PC-9 (cell line): ENCODE measurements at regions of chr16 and their contacts with region 1.

Region 1: GRCh38 chr16:79601931-79602627 is 1.5 kb upstream of the MAF start:
- DNase-seq: peak in 1 of 2 experiments; percentile 28
- H3K4me3 ChIP-seq: no peak overlapping the region
- H3K27ac ChIP-seq: no peak overlapping the region
- H3K4me1 ChIP-seq: no peaks in the 10 kb centered on the region
- H3K27me3 ChIP-seq: peaks cover 31% of the 10 kb centered on the region
- CTCF ChIP-seq: peak; percentile 82

Region 2: GRCh38 chr16:78002915-78003538 is 1599.1 kb before region 1 on chr16:
- CTCF ChIA-PET with region 1: no interaction called
- POLR2A ChIA-PET with region 1: no interaction called
- intact Hi-C with region 1: loop called (anchors 10 kb)
- DNase-seq: peak; percentile 57 to 63
- H3K4me3 ChIP-seq: no peak overlapping the region
- H3K27ac ChIP-seq: no peak overlapping the region
- H3K4me1 ChIP-seq: no peaks in the 10 kb centered on the region
- H3K27me3 ChIP-seq: peaks cover 15% of the 10 kb centered on the region
- CTCF ChIP-seq: peak; percentile 91

Region 3: GRCh38 chr16:78122774-78123315 is 1479.2 kb before region 1 on chr16:
- CTCF ChIA-PET with region 1: interaction called, 7 read pairs
- POLR2A ChIA-PET with region 1: no interaction called
- intact Hi-C with region 1: loop called (anchors 10 kb)
- DNase-seq: no peak
- H3K4me3 ChIP-seq: no peak overlapping the region
- H3K27ac ChIP-seq: no peak overlapping the region
- H3K4me1 ChIP-seq: no peaks in the 10 kb centered on the region
- H3K27me3 ChIP-seq: no peaks in the 10 kb centered on the region
- CTCF ChIP-seq: peak; percentile 68

Region 4: GRCh38 chr16:78478267-78478861 is 1123.7 kb before region 1 on chr16:
- CTCF ChIA-PET with region 1: no interaction called
- POLR2A ChIA-PET with region 1: no interaction called
- intact Hi-C with region 1: loop called (anchors 10 kb)
- DNase-seq: peak in 1 of 2 experiments; percentile 26
- H3K4me3 ChIP-seq: no peak overlapping the region
- H3K27ac ChIP-seq: no peak overlapping the region
- H3K4me1 ChIP-seq: no peaks in the 10 kb centered on the region
- H3K27me3 ChIP-seq: no peaks in the 10 kb centered on the region
- CTCF ChIP-seq: peak; percentile 75

Region 5: GRCh38 chr16:79885320-79885719 is 283.2 kb after region 1 on chr16:
- CTCF ChIA-PET with region 1: no interaction called
- POLR2A ChIA-PET with region 1: no interaction called
- intact Hi-C with region 1: no loop called
- DNase-seq: no peak
- H3K4me3 ChIP-seq: no peak overlapping the region
- H3K27ac ChIP-seq: no peak overlapping the region
- H3K4me1 ChIP-seq: no peaks in the 10 kb centered on the region
- H3K27me3 ChIP-seq: peaks cover 40% of the 10 kb centered on the region
- CTCF ChIP-seq: no peak